A673 (cell line): ENCODE measurements at regions of chr5 and their contacts with region 1.

Region 1: GRCh38 chr5:143403593-143404415 is at the start of gene NR3C1:
- DNase-seq: peak; percentile 87
- H3K4me3 ChIP-seq: peak within 1 kb of the TSS; percentile 78
- H3K27ac ChIP-seq: peak within 1 kb of the TSS; percentile 92
- H3K4me1 ChIP-seq: no peaks in the 10 kb centered on the region
- H3K27me3 ChIP-seq: no peaks in the 10 kb centered on the region
- CTCF ChIP-seq: peak; percentile 33
- total RNA-seq, gene NR3C1: 12.7 and 15.3 TPM in 2 replicates

Region 2: DNA sequence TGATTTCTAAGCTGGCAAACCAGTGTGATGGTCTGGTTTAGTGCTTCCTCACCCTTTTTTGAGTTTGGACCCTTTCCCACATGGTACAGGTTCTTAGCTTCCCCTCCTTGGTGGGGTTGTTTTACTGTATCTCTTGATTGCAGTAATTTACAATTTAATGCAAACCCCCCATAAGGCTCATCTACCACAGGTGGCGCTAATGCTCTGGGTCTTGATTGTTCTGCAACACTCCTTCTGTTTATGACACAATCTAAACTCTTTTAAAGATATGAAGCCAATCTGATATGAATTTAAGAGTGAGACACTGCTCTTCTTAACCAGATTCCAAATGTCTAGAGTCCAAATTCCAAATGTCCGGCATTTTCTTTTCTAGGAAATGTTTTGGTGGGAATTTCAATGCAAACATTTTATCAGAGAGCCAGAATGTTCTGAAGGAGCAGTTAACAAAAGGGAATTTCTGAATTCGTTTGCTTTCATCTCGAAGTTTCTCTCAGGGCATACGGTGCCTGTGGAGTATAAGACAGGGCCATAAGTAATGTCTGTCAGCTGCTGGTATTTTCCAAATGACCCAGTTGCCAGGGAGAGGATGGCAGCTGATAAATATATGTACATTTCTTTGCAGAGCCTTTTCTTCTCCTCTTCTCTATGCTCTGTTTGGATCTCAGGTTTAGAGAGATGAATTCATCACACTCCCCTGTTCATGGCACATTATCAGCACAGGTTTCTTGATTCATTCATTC is 386.9 kb before region 1 on chr5:
- CTCF ChIA-PET with region 1: interaction called, 8 read pairs
- POLR2A ChIA-PET with region 1: no interaction called
- intact Hi-C with region 1: loop called (anchors 5 kb)
- DNase-seq: peak; percentile 68
- H3K4me3 ChIP-seq: no peak overlapping the region
- H3K27ac ChIP-seq: no peak overlapping the region
- H3K4me1 ChIP-seq: no peaks in the 10 kb centered on the region
- H3K27me3 ChIP-seq: no peaks in the 10 kb centered on the region
- CTCF ChIP-seq: peak; percentile 82

Region 3: GRCh38 chr5:143128412-143129071 is 275.3 kb before region 1 on chr5:
- CTCF ChIA-PET with region 1: no interaction called
- POLR2A ChIA-PET with region 1: no interaction called
- intact Hi-C with region 1: loop called (anchors 2 kb)
- DNase-seq: peak; percentile 95
- H3K4me3 ChIP-seq: peak overlapping the region; percentile 5
- H3K27ac ChIP-seq: peak overlapping the region; percentile 85
- H3K4me1 ChIP-seq: peaks cover 63% of the 10 kb centered on the region
- H3K27me3 ChIP-seq: no peaks in the 10 kb centered on the region
- CTCF ChIP-seq: no peak

Region 4: GRCh38 chr5:143501304-143502044 is 97.7 kb after region 1 on chr5:
- CTCF ChIA-PET with region 1: no interaction called
- POLR2A ChIA-PET with region 1: no interaction called
- intact Hi-C with region 1: loop called (anchors 5 kb)
- DNase-seq: peak; percentile 84
- H3K4me3 ChIP-seq: no peak overlapping the region
- H3K27ac ChIP-seq: peak overlapping the region; percentile 56
- H3K4me1 ChIP-seq: peaks cover 20% of the 10 kb centered on the region
- H3K27me3 ChIP-seq: no peaks in the 10 kb centered on the region
- CTCF ChIP-seq: no peak

Region 5: GRCh38 chr5:143923634-143924255 is 519.9 kb after region 1 on chr5:
- CTCF ChIA-PET with region 1: no interaction called
- POLR2A ChIA-PET with region 1: no interaction called
- intact Hi-C with region 1: no loop called
- DNase-seq: no peak
- H3K4me3 ChIP-seq: no peak overlapping the region
- H3K27ac ChIP-seq: no peak overlapping the region
- H3K4me1 ChIP-seq: no peaks in the 10 kb centered on the region
- H3K27me3 ChIP-seq: no peaks in the 10 kb centered on the region
- CTCF ChIP-seq: no peak

Region 6: GRCh38 chr5:143968011-143968878 is 564.4 kb after region 1 on chr5:
- CTCF ChIA-PET with region 1: no interaction called
- POLR2A ChIA-PET with region 1: no interaction called
- intact Hi-C with region 1: loop called (anchors 10 kb)
- DNase-seq: peak; percentile 62
- H3K4me3 ChIP-seq: no peak overlapping the region
- H3K27ac ChIP-seq: no peak overlapping the region
- H3K4me1 ChIP-seq: no peaks in the 10 kb centered on the region
- H3K27me3 ChIP-seq: peaks cover 36% of the 10 kb centered on the region
- CTCF ChIP-seq: peak; percentile 69

Region 7: DNA sequence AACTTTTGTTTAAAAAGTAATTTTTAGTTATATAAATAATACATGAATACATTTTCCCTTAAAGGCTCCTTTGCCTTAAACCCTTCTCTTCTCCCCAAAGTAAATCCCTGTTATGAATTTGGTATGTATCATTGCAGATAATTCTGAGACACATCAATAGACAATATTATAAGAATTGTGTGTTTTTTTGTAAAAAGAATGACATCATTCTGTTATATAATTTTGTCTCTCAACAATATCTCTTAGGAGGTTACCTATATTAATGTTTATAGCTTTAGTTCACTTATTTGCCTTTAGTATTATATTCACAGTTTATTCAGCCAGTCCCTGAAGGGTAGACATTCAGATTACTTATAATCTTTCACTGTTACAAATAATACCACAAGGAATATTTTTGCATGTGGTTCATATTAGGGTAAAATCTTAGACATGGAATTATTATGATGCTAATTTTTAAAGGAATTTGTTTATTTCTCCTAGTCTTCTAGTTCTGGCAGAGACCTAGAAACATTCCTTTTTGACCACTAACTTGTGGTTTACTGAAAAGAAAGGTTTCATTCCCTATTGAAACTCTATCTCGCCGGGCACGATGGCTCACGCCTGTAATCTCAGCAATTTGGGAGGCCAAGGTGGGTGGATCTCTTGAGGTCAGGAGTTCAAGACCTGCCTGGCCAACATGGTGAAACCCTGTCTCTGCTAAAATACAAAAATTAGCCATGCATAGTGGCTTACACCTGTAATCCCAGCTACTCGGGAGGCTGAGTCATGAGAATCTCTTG is 872.4 kb after region 1 on chr5:
- CTCF ChIA-PET with region 1: no interaction called
- POLR2A ChIA-PET with region 1: no interaction called
- intact Hi-C with region 1: no loop called
- DNase-seq: no peak
- H3K4me3 ChIP-seq: no peak overlapping the region
- H3K27ac ChIP-seq: no peak overlapping the region
- H3K4me1 ChIP-seq: no peaks in the 10 kb centered on the region
- H3K27me3 ChIP-seq: no peaks in the 10 kb centered on the region
- CTCF ChIP-seq: no peak